Gastrocnemius medialis (tissue), 4 donors: ENCODE measurements at regions of chr5 and their contacts with region 1.

Region 1: DNA sequence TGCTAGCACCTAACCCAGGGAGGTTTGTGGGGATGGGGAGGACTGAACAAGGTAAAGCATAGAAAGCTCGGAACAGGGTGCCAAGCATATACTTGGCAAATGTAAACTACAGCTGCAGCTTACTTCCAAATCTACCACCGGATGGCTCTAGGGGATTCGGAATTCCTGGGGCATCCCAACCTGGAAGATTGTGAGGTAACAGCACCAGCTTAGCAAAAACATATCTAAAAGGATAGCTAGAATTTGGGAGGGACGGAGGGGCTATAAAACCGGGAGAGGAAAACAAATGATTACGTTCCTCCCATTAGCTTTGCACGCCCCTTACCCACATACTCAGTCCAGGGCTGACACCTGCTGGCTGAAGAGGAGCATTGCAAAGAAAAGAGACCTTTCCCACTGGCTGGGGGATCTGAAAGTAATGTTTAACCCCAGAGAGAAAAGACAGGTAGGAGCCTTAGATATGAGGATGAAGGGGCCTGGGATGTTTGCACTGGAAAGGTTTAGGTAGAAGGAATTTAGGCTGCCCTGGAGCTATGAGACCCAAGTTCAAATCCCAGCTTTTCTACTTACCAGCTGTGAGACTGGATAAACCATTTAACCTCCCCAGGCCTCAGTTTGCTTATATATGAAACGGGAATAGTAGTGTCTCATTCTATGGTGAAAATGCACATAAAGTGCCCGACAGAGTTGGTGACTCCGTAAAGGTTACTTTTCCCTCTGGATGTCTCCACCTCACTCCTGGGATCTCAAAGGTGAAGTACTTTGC is 73.6 kb downstream of the FAM114A2 start:
- DNase-seq: no peak
- ATAC-seq: no peak
- H3K4me3 ChIP-seq: no peak overlapping the region
- H3K27ac ChIP-seq: no peak overlapping the region
- H3K4me1 ChIP-seq: no peaks in the 10 kb centered on the region
- H3K27me3 ChIP-seq: no peaks in the 10 kb centered on the region
- CTCF ChIP-seq: peak; percentile 59 to 71 (median 66)
- POLR2A ChIP-seq: no peak

Region 2: DNA sequence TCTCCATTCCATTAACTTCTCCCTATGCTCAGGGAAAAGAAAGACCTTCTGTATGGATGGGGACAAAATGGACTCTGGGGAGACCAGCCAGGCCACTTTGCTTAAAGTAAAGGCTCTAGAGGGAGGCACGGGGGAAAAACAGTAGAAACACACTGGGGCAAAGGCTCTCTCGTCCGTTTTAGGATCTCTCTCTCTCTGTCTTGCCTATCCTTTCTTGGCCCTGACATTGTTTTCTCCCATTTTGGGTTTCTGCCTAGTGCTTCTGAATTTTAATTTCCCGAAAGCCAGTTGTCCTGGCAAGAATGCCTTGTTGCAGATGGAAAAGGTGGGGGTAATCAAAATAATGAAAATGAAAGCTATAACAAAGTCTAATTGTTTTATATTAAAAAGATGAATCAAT is 1588.2 kb before region 1 on chr5:
- in situ Hi-C with region 1: no loop called
- intact Hi-C with region 1: no loop called
- DNase-seq: no peak
- ATAC-seq: no peak
- H3K4me3 ChIP-seq: no peak overlapping the region
- H3K27ac ChIP-seq: no peak overlapping the region
- H3K4me1 ChIP-seq: no peaks in the 10 kb centered on the region
- H3K27me3 ChIP-seq: no peaks in the 10 kb centered on the region
- CTCF ChIP-seq: no peak
- POLR2A ChIP-seq: no peak

Region 3: GRCh38 chr5:152532714-152533113 is 1432.3 kb before region 1 on chr5:
- in situ Hi-C with region 1: loop called in 2 of 4 experiments (anchors 10 to 25 kb)
- intact Hi-C with region 1: loop called (anchors 10 kb)
- DNase-seq: no peak
- ATAC-seq: no peak
- H3K4me3 ChIP-seq: no peak overlapping the region
- H3K27ac ChIP-seq: no peak overlapping the region
- H3K4me1 ChIP-seq: no peaks in the 10 kb centered on the region
- H3K27me3 ChIP-seq: no peaks in the 10 kb centered on the region
- CTCF ChIP-seq: peak in 2 of 5 experiments; percentile 30 to 39
- POLR2A ChIP-seq: no peak

Region 4: GRCh38 chr5:152560512-152561137 is 1404.4 kb before region 1 on chr5:
- in situ Hi-C with region 1: loop called in 2 of 4 experiments (anchors 10 to 25 kb)
- intact Hi-C with region 1: loop called (anchors 10 kb)
- DNase-seq: no peak
- ATAC-seq: no peak
- H3K4me3 ChIP-seq: no peak overlapping the region
- H3K27ac ChIP-seq: no peak overlapping the region
- H3K4me1 ChIP-seq: no peaks in the 10 kb centered on the region
- H3K27me3 ChIP-seq: no peaks in the 10 kb centered on the region
- CTCF ChIP-seq: peak in 4 of 5 experiments; percentile 22 to 63 (median 39)
- POLR2A ChIP-seq: no peak

Region 5: DNA sequence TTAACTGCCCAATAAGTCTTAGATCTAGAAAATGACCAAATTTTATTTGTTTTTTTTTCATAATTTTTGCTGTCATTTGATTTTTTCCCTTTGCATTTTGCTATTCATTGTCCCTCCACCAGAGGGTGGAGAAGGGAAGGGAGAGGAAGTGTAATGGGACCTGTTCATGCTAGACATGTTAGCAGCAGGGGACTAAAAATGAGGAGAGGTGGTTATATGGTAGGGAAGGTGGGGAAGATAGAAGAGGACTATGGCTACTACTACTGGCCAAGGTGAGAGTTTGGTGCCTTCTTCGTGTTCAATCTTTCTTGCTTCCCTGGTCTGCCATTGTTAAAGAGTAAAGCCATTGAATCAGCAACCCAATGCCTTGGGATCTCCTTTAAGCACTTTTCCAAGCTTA is 468.2 kb before region 1 on chr5:
- in situ Hi-C with region 1: loop called in 3 of 4 experiments (anchors 10 to 25 kb)
- intact Hi-C with region 1: loop called (anchors 5 kb)
- DNase-seq: no peak
- ATAC-seq: no peak
- H3K4me3 ChIP-seq: no peak overlapping the region
- H3K27ac ChIP-seq: no peak overlapping the region
- H3K4me1 ChIP-seq: no peaks in the 10 kb centered on the region
- H3K27me3 ChIP-seq: peaks cover 0 to 5% (median 0%) of the 10 kb centered on the region in 3 donors
- CTCF ChIP-seq: peak; percentile 14 to 39 (median 27)
- POLR2A ChIP-seq: no peak

Region 6: DNA sequence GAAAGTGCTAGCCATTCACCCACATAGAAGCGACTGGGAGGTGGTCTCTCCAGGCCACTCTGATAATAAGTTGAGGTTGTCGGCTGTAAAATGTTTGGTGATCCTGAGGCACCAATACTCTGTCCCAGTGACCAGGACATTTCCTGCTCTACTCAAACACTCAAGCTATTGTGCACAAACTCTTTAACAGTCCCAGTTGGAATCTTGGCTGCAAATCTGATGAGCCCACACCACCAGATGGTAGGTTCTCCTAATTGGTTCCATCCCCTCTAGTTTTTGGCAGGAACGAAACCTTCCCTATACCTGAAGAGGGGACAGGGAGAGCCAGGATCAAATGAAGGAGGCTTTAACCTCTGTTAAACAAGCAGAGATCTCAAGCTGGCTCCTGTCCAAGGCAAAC is 460.3 kb before region 1 on chr5:
- in situ Hi-C with region 1: loop called in 3 of 4 experiments (anchors 10 to 25 kb)
- intact Hi-C with region 1: loop called (anchors 5 kb)
- DNase-seq: no peak
- ATAC-seq: no peak
- H3K4me3 ChIP-seq: no peak overlapping the region
- H3K27ac ChIP-seq: no peak overlapping the region
- H3K4me1 ChIP-seq: no peaks in the 10 kb centered on the region
- H3K27me3 ChIP-seq: no peaks in the 10 kb centered on the region
- CTCF ChIP-seq: no peak
- POLR2A ChIP-seq: no peak

Region 7: GRCh38 chr5:153523831-153524230 is 441.2 kb before region 1 on chr5:
- in situ Hi-C with region 1: loop called in 1 of 4 experiments (anchors 25 kb)
- intact Hi-C with region 1: no loop called
- DNase-seq: no peak
- ATAC-seq: no peak
- H3K4me3 ChIP-seq: no peak overlapping the region
- H3K27ac ChIP-seq: no peak overlapping the region
- H3K4me1 ChIP-seq: no peaks in the 10 kb centered on the region
- H3K27me3 ChIP-seq: no peaks in the 10 kb centered on the region
- CTCF ChIP-seq: no peak
- POLR2A ChIP-seq: no peak

Region 8: GRCh38 chr5:153926201-153926600 is 38.9 kb before region 1 on chr5:
- in situ Hi-C with region 1: no loop called
- intact Hi-C with region 1: no loop called
- DNase-seq: no peak
- ATAC-seq: no peak
- H3K4me3 ChIP-seq: no peak overlapping the region
- H3K27ac ChIP-seq: no peak overlapping the region
- H3K4me1 ChIP-seq: no peaks in the 10 kb centered on the region
- H3K27me3 ChIP-seq: no peaks in the 10 kb centered on the region
- CTCF ChIP-seq: no peak
- POLR2A ChIP-seq: no peak

Region 9: GRCh38 chr5:154042766-154043165 is 77.7 kb after region 1 on chr5:
- in situ Hi-C with region 1: no loop called
- intact Hi-C with region 1: no loop called
- DNase-seq: no peak
- ATAC-seq: no peak
- H3K4me3 ChIP-seq: no peak overlapping the region
- H3K27ac ChIP-seq: peak overlapping the region in 3 of 4 donors; percentile 56 to 60 (median 59)
- H3K4me1 ChIP-seq: peaks cover 45 to 47% of the 10 kb centered on the region in 2 donors
- H3K27me3 ChIP-seq: no peaks in the 10 kb centered on the region
- CTCF ChIP-seq: no peak
- POLR2A ChIP-seq: no peak